ENCODE measurements at regions of chr2 and their contacts with region 1.

Region 1: GRCh38 chr2:191501561-191502168 is 176.3 kb upstream of the NABP1 start:
- DNase-seq: peak; percentile 58
- H3K4me3 ChIP-seq: no peak overlapping the region
- H3K27ac ChIP-seq: no peak overlapping the region
- H3K4me1 ChIP-seq: peaks cover 11% of the 10 kb centered on the region
- H3K27me3 ChIP-seq: no peaks in the 10 kb centered on the region
- CTCF ChIP-seq: peak; percentile 66

Region 2: DNA sequence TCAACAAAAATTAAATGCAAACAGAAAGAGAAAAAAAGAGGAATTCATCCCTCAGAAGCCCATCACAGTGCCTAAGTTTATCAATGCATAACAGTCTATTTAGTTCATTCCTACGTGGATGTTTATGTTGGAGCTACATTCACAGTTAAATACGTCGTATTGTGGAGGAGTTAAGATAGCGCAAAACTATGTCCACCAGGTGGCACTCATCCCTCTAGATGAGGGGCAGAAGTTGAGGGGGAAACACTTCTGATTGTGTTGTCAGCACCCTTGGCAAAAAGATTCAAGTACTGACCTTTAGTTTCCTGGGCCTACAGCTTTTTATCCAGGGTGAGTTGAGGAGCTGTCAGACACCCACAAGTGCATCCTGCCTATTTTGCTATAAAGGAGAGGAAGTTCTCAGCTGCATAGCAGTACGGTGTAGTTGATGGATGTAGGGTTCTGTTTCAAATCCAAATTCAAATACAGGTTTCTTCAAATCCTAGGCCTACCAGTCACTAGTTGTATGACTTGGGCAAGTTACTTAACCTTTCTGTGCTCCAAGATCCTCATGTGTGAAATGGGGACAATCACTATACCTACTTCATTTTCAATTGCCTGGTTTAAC is 283.3 kb before region 1 on chr2:
- CTCF ChIA-PET with region 1: interaction called, 8 read pairs
- POLR2A ChIA-PET with region 1: no interaction called
- intact Hi-C with region 1: loop called (anchors 1 kb)
- DNase-seq: peak; percentile 89
- H3K4me3 ChIP-seq: no peak overlapping the region
- H3K27ac ChIP-seq: no peak overlapping the region
- H3K4me1 ChIP-seq: no peaks in the 10 kb centered on the region
- H3K27me3 ChIP-seq: no peaks in the 10 kb centered on the region
- CTCF ChIP-seq: peak; percentile 82

Region 3: DNA sequence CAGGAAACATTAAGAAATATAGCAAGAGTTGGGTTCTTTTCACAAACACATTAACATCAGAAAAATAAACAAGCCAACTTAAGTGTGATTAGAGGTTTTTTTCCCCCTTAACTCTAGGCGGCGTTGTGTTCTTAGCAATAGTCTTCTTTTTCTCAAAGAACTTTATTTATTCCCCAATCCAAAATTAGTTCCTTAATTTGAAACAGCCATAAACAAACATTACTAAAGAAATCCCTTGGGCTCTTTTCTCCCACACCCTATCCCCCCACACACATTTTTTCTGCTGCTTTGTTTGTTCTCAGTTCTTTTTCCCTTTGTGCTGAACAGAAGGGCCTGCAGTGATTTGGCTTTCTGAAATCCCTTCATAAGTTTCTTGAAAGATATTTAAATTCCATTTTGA is 269.7 kb before region 1 on chr2:
- CTCF ChIA-PET with region 1: no interaction called
- POLR2A ChIA-PET with region 1: no interaction called
- intact Hi-C with region 1: loop called (anchors 1 kb)
- DNase-seq: peak; percentile 53
- H3K4me3 ChIP-seq: no peak overlapping the region
- H3K27ac ChIP-seq: no peak overlapping the region
- H3K4me1 ChIP-seq: peaks cover 5% of the 10 kb centered on the region
- H3K27me3 ChIP-seq: no peaks in the 10 kb centered on the region
- CTCF ChIP-seq: peak; percentile 67

Region 4: GRCh38 chr2:191299010-191299409 is 202.7 kb before region 1 on chr2:
- CTCF ChIA-PET with region 1: no interaction called
- POLR2A ChIA-PET with region 1: no interaction called
- intact Hi-C with region 1: loop called (anchors 1 kb)
- DNase-seq: peak; percentile 33
- H3K4me3 ChIP-seq: no peak overlapping the region
- H3K27ac ChIP-seq: no peak overlapping the region
- H3K4me1 ChIP-seq: no peaks in the 10 kb centered on the region
- H3K27me3 ChIP-seq: no peaks in the 10 kb centered on the region
- CTCF ChIP-seq: peak; percentile 56

Measured in A673 (cell line).